Right ventricle myocardium inferior (tissue), 1 donor: ENCODE measurements at regions of chr16 and their contacts with region 1.

Region 1: DNA sequence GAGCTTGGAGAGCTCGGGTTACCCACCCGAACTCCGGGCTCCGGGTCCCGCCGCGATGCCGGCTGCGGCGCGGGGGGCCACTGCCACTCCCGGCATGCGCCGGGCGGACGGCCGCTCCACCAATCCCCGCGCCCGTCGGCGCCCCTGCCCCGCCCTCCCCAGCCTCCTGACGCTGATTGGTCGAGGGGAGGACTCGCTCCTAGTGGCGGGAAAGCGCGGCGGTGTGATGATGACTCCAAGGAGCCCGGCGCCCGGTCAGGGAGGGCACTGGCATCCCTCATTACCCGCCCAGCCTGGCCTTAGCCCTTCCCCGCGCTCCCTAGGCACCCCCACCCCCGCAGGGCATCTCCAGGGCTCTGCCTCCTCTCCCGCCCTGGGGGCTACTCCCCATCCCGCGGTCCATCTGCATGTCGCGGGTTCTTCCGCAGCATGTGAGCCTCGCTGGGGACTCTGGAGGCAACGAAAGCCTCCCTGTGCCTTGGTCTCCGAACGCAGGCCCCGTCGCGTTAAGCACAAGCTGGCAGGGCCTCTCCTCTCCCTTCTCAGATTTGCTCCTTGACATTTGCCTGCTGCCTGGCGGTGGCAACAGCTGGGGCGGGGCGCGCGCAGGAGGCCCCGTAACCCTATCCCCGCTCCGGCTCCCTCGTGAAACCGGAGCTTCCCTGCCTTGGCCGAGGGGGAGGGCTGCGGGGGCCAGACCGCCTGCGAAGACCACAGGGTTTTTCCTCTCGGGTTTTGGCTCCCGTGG is 1.7 kb downstream of the ATP2A1 start:
- DNase-seq: peak; percentile 91
- ATAC-seq: peak; percentile 94

Region 2: GRCh38 chr16:28901862-28902459 is 21.9 kb after region 1 on chr16:
- intact Hi-C with region 1: no loop called
- DNase-seq: peak; percentile 44
- ATAC-seq: no peak

Region 3: GRCh38 chr16:28924732-28925385 is 44.8 kb after region 1 on chr16 and contains the start of gene RABEP2:
- intact Hi-C with region 1: loop called (anchors 5 kb)
- DNase-seq: peak; percentile 96
- ATAC-seq: peak; percentile 95
- total RNA-seq, gene RABEP2: 22.3 TPM

Region 4: DNA sequence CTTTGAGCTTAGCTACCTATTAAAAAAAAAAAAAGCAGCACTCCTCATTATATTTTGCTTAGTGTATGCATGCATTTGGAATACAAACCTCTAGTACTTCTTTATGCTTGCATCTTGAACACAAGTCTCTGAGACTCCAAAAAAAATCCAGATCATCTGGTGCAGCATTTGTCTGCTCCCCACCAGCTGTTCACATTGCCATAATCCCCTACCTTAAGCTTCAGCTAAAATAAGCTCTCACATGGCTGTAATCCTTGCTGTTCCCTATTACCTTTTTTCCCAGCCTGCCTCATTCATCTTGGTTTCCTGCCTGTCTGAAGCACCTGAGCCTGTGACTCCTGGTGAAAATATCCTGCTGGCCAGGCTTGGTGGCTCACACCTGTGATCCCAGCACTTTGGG is 63.3 kb after region 1 on chr16:
- intact Hi-C with region 1: loop called (anchors 1 kb)
- DNase-seq: no peak
- ATAC-seq: no peak